PC-9 (cell line): ENCODE measurements at regions of chr22 and their contacts with region 1.

Region 1: DNA sequence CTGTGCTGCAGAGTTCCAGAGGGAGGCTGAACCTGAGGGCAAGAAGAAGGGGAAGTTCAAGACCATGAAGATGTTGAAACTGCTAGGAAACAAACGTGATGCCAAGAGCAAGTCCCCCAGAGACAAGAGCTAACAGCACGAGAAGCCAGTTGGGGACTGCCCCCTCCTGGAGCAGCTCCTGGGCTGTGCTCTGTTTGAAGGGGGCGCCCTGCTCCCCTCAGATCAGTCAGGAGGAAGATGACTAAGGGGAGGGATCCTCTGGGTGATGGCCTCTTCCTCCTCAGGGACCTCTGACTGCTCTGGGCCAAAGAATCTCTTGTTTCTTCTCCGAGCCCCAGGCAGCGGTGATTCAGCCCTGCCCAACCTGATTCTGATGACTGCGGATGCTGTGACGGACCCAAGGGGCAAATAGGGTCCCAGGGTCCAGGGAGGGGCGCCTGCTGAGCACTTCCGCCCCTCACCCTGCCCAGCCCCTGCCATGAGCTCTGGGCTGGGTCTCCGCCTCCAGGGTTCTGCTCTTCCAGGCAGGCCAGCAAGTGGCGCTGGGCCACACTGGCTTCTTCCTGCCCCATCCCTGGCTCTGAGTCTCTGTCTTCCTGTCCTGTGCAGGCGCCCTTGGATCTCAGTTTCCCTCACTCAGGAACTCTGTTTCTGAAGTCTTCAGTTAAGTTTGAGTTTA is 12.6 kb downstream of the C22orf23 start:
- DNase-seq: no peak
- H3K4me3 ChIP-seq: no peak overlapping the region
- H3K27ac ChIP-seq: no peak overlapping the region
- H3K4me1 ChIP-seq: no peaks in the 10 kb centered on the region
- H3K27me3 ChIP-seq: no peaks in the 10 kb centered on the region
- CTCF ChIP-seq: no peak

Region 2: DNA sequence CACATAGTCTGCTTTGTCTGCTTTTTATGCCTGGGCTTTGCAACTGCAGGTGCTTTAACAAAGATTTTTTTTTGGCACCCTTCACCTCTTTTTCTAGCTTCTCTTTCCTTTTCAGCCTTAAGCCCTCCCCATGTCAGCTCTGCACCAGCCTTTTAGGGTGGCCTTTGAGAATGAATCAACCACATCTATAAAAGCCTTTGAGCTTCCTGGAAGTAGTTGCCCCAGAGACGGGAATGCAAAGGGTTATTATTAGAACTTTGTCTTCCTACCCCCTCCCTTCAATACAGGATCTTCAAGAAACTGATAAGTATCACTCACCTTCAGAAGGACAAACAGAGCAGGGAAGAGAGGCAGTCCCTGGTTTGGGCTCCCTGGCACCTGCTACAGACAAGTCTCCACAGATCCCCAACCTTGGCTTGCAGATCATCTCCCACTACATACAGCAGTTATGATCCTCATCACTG is 1132.0 kb before region 1 on chr22:
- CTCF ChIA-PET with region 1: no interaction called
- POLR2A ChIA-PET with region 1: no interaction called
- intact Hi-C with region 1: no loop called
- DNase-seq: peak in 1 of 2 experiments; percentile 66
- H3K4me3 ChIP-seq: no peak overlapping the region
- H3K27ac ChIP-seq: no peak overlapping the region
- H3K4me1 ChIP-seq: peaks cover 22% of the 10 kb centered on the region
- H3K27me3 ChIP-seq: peaks cover 31% of the 10 kb centered on the region
- CTCF ChIP-seq: no peak

Region 3: DNA sequence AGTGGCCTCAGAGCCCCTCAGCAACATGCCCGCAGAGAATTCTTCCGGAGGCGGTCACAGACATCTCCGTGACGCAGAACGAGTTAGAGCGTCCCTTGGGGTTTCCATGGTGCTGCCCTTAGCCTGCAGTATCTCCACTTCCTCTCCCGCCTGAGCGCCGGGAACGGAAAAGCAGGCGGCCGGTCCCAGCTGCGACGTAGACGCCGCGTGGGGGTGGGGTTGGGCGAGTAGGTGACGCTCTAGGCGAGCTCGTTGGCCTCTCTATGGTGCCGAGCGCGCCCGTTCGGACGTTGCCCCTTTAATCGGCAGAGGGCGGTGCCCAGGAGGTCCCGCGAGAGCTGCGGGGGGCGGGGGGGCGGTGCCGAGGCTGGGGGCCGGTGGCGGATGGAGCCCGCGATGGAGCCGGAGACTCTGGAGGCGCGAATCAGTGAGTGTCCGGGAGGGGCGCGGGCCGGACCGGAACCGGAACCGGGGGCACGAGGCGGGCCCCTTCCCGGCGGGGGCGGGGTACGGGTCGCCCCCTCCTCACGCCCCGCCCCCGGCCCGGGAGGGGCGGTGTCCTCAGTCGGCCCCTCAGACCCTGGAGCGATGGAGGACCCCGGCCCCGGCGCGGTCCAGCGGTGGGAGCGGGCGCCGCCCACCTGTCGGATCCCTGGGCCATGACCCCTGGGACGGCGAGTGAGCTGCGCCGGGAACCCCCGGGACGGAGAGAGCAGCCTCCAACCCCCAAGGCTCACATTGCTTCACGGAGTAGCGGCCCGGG is 332.2 kb before region 1 on chr22 and contains the start of gene GGA1:
- CTCF ChIA-PET with region 1: no interaction called
- POLR2A ChIA-PET with region 1: no interaction called
- intact Hi-C with region 1: no loop called
- DNase-seq: peak; percentile 95 to 96
- H3K4me3 ChIP-seq: peak within 1 kb of the TSS; percentile 60
- H3K27ac ChIP-seq: peak within 1 kb of the TSS; percentile 99
- H3K4me1 ChIP-seq: peaks cover 43% of the 10 kb centered on the region
- H3K27me3 ChIP-seq: no peaks in the 10 kb centered on the region
- CTCF ChIP-seq: no peak
- total RNA-seq, gene GGA1: 99.2 and 102 TPM in 2 replicates

Region 4: GRCh38 chr22:37880668-37881440 is 60.0 kb before region 1 on chr22:
- CTCF ChIA-PET with region 1: no interaction called
- POLR2A ChIA-PET with region 1: no interaction called
- intact Hi-C with region 1: no loop called
- DNase-seq: no peak
- H3K4me3 ChIP-seq: no peak overlapping the region
- H3K27ac ChIP-seq: no peak overlapping the region
- H3K4me1 ChIP-seq: no peaks in the 10 kb centered on the region
- H3K27me3 ChIP-seq: no peaks in the 10 kb centered on the region
- CTCF ChIP-seq: no peak

Region 5: GRCh38 chr22:37926771-37927636 is 13.8 kb before region 1 on chr22:
- CTCF ChIA-PET with region 1: interaction called, 15 read pairs
- POLR2A ChIA-PET with region 1: no interaction called
- intact Hi-C with region 1: no loop called
- DNase-seq: no peak
- H3K4me3 ChIP-seq: no peak overlapping the region
- H3K27ac ChIP-seq: no peak overlapping the region
- H3K4me1 ChIP-seq: no peaks in the 10 kb centered on the region
- H3K27me3 ChIP-seq: no peaks in the 10 kb centered on the region
- CTCF ChIP-seq: no peak

Region 6: DNA sequence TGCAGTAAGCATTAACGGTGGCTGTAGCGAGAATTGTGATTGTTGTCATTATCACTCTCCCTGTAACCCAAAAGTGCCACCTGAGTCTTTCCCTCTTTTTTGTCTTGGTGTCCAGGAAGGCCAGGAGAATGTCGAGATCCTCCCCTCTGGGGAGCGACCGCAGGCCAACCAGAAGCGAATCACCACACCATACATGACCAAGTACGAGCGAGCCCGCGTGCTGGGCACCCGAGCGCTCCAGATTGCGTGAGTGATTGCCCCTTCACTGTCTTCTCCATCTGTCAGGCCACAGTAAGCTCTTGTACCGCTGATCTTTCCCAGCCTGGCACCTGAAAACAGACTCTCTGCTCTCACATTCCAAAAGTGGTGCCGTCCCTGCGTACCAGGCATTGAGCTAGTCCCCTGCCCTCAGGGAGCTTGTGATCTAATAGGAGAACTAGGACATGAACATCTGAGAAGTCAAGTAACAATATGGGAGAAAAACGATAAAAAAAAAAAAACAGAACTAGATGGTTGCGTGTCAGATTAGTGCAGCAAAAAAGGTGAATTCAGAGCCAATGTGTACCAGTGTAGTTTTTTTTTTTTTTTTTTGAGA is 18.5 kb after region 1 on chr22:
- CTCF ChIA-PET with region 1: interaction called, 13 read pairs
- POLR2A ChIA-PET with region 1: no interaction called
- intact Hi-C with region 1: no loop called
- DNase-seq: no peak
- H3K4me3 ChIP-seq: no peak overlapping the region
- H3K27ac ChIP-seq: no peak overlapping the region
- H3K4me1 ChIP-seq: peaks cover 9% of the 10 kb centered on the region
- H3K27me3 ChIP-seq: no peaks in the 10 kb centered on the region
- CTCF ChIP-seq: no peak